ENCODE measurements at regions of chr19 and their contacts with region 1.

Region 1: GRCh38 chr19:53906211-53907192 is 2.6 kb upstream of the CACNG7 start:
- DNase-seq: no peak
- H3K4me3 ChIP-seq: no peak overlapping the region
- H3K27ac ChIP-seq: no peak overlapping the region
- H3K4me1 ChIP-seq: peaks cover 0 to 35% (median 19%) of the 10 kb centered on the region in 4 donors
- H3K27me3 ChIP-seq: peaks cover 44 to 71% (median 50%) of the 10 kb centered on the region in 3 donors
- CTCF ChIP-seq: peak; percentile 21 to 84 (median 58)
- EP300 ChIP-seq: no peak
- POLR2A ChIP-seq: no peak

Region 2: GRCh38 chr19:53853707-53854106 is 52.8 kb before region 1 on chr19:
- intact Hi-C with region 1: loop called (anchors 10 kb)
- DNase-seq: no peak
- H3K4me3 ChIP-seq: no peak overlapping the region
- H3K27ac ChIP-seq: no peak overlapping the region
- H3K4me1 ChIP-seq: peaks cover 0 to 3% (median 0%) of the 10 kb centered on the region in 4 donors
- H3K27me3 ChIP-seq: peaks cover 0 to 31% (median 0%) of the 10 kb centered on the region in 3 donors
- CTCF ChIP-seq: no peak
- EP300 ChIP-seq: no peak
- POLR2A ChIP-seq: no peak

Measured in sigmoid colon (tissue), 7 donors.